Activated naive CD4-positive, alpha-beta T cell treated with anti-CD3 and anti-CD28 coated beads for 36 hours (primary cell): ENCODE measurements at regions of chr3 and their contacts with region 1.

Region 1: GRCh38 chr3:196609343-196609775 is 30.1 kb upstream of the NRROS start:
- DNase-seq: peak; percentile 96
- H3K4me3 Mint-ChIP-seq: peak overlapping the region; percentile 35
- H3K27ac Mint-ChIP-seq: peak overlapping the region; percentile 21
- H3K4me1 Mint-ChIP-seq: peaks cover 33% of the 10 kb centered on the region
- H3K27me3 Mint-ChIP-seq: no peaks in the 10 kb centered on the region

Region 2: GRCh38 chr3:196432137-196432879 is 177.1 kb before region 1 on chr3 and contains the start of gene UBXN7:
- CTCF ChIA-PET with region 1: no interaction called
- intact Hi-C with region 1: no loop called
- DNase-seq: peak; percentile 97
- H3K4me3 Mint-ChIP-seq: peak within 1 kb of the TSS; percentile 69
- H3K27ac Mint-ChIP-seq: peak within 1 kb of the TSS; percentile 93
- H3K4me1 Mint-ChIP-seq: peaks cover 15% of the 10 kb centered on the region
- H3K27me3 Mint-ChIP-seq: no peaks in the 10 kb centered on the region
- total RNA-seq, gene UBXN7: 54.2 to 62.5 TPM

Region 3: GRCh38 chr3:196528639-196529233 is 80.6 kb before region 1 on chr3:
- CTCF ChIA-PET with region 1: interaction called, 5 read pairs
- intact Hi-C with region 1: loop called (anchors 2 kb)
- DNase-seq: peak; percentile 87
- H3K4me3 Mint-ChIP-seq: peak overlapping the region; percentile 74
- H3K27ac Mint-ChIP-seq: peak overlapping the region; percentile 36
- H3K4me1 Mint-ChIP-seq: peaks cover 6% of the 10 kb centered on the region
- H3K27me3 Mint-ChIP-seq: peaks cover 2% of the 10 kb centered on the region

Region 4: GRCh38 chr3:196632046-196632751 is 22.8 kb after region 1 on chr3:
- CTCF ChIA-PET with region 1: interaction called, 29 read pairs
- intact Hi-C with region 1: loop called (anchors 1 kb)
- DNase-seq: peak; percentile 90
- H3K4me3 Mint-ChIP-seq: peak overlapping the region; percentile 88
- H3K27ac Mint-ChIP-seq: peak overlapping the region; percentile 97
- H3K4me1 Mint-ChIP-seq: peaks cover 48% of the 10 kb centered on the region
- H3K27me3 Mint-ChIP-seq: no peaks in the 10 kb centered on the region

Region 5: DNA sequence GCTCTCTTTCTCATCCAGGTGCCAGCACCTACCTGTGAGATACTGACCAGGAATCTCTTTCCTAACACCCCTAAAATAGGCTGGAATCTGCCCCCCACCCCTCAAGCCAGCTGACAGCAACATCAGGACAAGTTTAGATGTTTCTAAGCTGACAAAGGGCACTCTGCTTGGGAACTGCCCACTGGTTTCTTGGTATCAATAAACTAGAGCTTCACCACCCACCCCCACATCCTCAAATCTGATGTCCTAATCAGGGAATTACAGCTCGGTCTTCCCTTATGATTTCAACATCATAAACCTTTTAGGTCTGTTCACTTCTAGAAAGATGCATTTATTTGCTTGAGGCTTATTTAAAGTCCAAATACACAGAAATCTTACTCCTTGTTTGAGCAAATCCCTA is 68.0 kb after region 1 on chr3:
- CTCF ChIA-PET with region 1: interaction called, 15 read pairs
- intact Hi-C with region 1: no loop called
- DNase-seq: no peak
- H3K4me3 Mint-ChIP-seq: no peak overlapping the region
- H3K27ac Mint-ChIP-seq: no peak overlapping the region
- H3K4me1 Mint-ChIP-seq: peaks cover 14% of the 10 kb centered on the region
- H3K27me3 Mint-ChIP-seq: no peaks in the 10 kb centered on the region

Region 6: GRCh38 chr3:196711838-196712513 is 102.6 kb after region 1 on chr3 and contains the starts of genes CEP19 and PIGX:
- CTCF ChIA-PET with region 1: interaction called, 8 read pairs
- intact Hi-C with region 1: loop called (anchors 1 kb)
- DNase-seq: peak; percentile 94
- H3K4me3 Mint-ChIP-seq: peak within 1 kb of the TSS; percentile 83
- H3K27ac Mint-ChIP-seq: peak within 1 kb of the TSS; percentile 92
- H3K4me1 Mint-ChIP-seq: peaks cover 34% of the 10 kb centered on the region
- H3K27me3 Mint-ChIP-seq: no peaks in the 10 kb centered on the region
- total RNA-seq, gene CEP19: 3.1 to 4.4 TPM
- total RNA-seq, gene PIGX: 30.7 to 32.8 TPM

Region 7: DNA sequence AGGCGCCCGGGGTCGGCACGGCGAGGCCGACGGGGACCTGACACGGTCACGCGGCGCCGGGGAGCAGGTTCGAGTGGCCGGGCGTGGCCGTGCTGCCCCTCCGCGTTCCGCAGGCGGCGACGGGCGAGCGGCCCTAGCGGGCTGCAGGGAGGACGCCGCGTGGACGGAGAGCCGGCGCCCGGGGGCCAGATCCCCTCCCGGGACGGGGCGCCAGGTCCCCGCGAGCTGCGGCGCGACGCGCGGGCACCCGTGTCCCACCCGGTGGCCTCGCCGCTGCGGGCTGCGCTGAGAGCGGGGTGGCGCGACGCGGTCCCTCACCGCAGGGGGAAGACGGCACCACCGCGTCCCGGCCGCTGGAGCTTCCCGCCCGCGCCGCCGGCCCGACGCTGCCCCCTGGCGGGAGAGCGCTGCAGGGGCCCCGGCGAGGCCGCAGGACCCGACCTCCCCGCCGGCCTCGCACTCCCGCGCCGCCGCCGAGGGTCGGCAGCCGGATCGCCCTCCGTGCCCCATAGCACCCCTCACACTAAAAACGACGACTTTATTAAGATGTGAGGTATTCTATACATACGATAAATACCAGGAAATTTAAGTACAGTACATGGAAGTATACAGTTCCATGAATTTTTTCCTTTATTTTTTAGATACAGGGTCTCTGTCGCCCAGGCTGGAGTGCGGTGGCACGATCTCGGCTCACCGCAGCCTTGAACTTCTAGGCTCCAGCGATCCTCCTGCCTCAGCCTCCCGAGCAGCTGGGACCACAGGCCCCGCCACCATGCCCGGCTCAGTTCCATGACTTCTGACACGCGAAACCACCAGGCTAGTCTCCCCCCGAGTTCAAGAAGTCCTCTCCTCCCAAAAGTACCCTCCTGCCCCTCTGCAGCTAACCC is 360.5 kb after region 1 on chr3:
- CTCF ChIA-PET with region 1: interaction called, 3 read pairs
- intact Hi-C with region 1: loop called (anchors 1 kb)
- DNase-seq: peak; percentile 68
- H3K4me3 Mint-ChIP-seq: peak overlapping the region; percentile 70
- H3K27ac Mint-ChIP-seq: no peak overlapping the region
- H3K4me1 Mint-ChIP-seq: peaks cover 7% of the 10 kb centered on the region
- H3K27me3 Mint-ChIP-seq: peaks cover 22% of the 10 kb centered on the region